B cell (primary cell): ENCODE measurements at regions of chr19 and their contacts with region 1.

Region 1: GRCh38 chr19:43463381-43464136 is 1.8 kb downstream of the LYPD3 start:
- DNase-seq: peak; percentile 98
- ATAC-seq: peak; percentile 92
- H3K4me3 ChIP-seq: peak overlapping the region; percentile 13 to 96 (median 77)
- H3K4me3 Mint-ChIP-seq: peak overlapping the region; percentile 97
- H3K27ac ChIP-seq: peak overlapping the region; percentile 30 to 40
- H3K27ac Mint-ChIP-seq: peak overlapping the region; percentile 85
- H3K4me1 ChIP-seq: peaks cover 8 to 14% of the 10 kb centered on the region in 2 donors
- H3K4me1 Mint-ChIP-seq: peaks cover 15% of the 10 kb centered on the region
- H3K27me3 ChIP-seq: peaks cover 0 to 12% (median 5%) of the 10 kb centered on the region in 4 experiments
- H3K27me3 Mint-ChIP-seq: peaks cover 4% of the 10 kb centered on the region
- CTCF ChIP-seq: no peak

Region 2: DNA sequence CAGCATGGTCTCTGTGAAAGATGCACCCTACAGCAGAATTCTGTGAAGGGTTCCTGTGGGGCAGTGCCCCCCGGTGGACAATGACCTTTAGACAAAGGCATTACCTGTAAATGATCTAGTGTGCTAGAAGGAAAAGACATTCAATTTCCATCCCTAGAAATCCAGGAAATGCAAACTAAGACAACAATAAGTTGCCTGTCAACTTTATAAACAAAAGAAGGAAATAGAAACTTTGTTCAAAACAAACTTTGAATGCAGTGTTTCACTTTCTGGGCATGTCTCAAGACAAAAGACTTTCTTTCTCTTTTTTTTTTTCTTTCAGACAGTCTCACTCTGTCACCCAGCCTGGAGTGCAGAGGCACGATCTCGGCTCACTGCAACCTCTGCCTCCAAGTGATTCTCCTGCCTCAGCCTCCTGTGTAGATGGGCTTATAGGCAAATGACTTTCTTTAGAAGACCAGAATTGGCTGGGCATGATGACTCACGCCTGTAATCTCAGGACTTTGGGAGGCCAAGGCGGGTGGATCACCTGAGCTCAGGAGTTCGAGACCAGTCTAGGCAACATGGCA is 33.3 kb before region 1 on chr19:
- CTCF ChIA-PET with region 1: interaction called, 12 read pairs
- POLR2A ChIA-PET with region 1: no interaction called
- intact Hi-C with region 1: no loop called
- DNase-seq: no peak
- ATAC-seq: peak; percentile 49
- H3K4me3 ChIP-seq: no peak overlapping the region
- H3K4me3 Mint-ChIP-seq: no peak overlapping the region
- H3K27ac ChIP-seq: peak overlapping the region in 1 of 2 donors; percentile 39
- H3K27ac Mint-ChIP-seq: no peak overlapping the region
- H3K4me1 ChIP-seq: peaks cover 8% of the 10 kb centered on the region in 2 donors
- H3K4me1 Mint-ChIP-seq: peaks cover 25% of the 10 kb centered on the region
- H3K27me3 ChIP-seq: peaks cover 0 to 2% (median 0%) of the 10 kb centered on the region in 4 experiments
- H3K27me3 Mint-ChIP-seq: no peaks in the 10 kb centered on the region
- CTCF ChIP-seq: peak; percentile 10

Region 3: GRCh38 chr19:43474986-43475705 is 11.6 kb after region 1 on chr19:
- CTCF ChIA-PET with region 1: interaction called, 11 read pairs
- POLR2A ChIA-PET with region 1: no interaction called
- intact Hi-C with region 1: loop called (anchors 1 kb)
- DNase-seq: peak; percentile 98
- ATAC-seq: peak; percentile 98
- H3K4me3 ChIP-seq: peak overlapping the region; percentile 45 to 66 (median 52)
- H3K4me3 Mint-ChIP-seq: peak overlapping the region; percentile 90
- H3K27ac ChIP-seq: peak overlapping the region; percentile 50 to 84
- H3K27ac Mint-ChIP-seq: peak overlapping the region; percentile 92
- H3K4me1 ChIP-seq: peaks cover 4 to 13% of the 10 kb centered on the region in 2 donors
- H3K4me1 Mint-ChIP-seq: peaks cover 13% of the 10 kb centered on the region
- H3K27me3 ChIP-seq: no peaks in the 10 kb centered on the region
- H3K27me3 Mint-ChIP-seq: no peaks in the 10 kb centered on the region
- CTCF ChIP-seq: no peak

Region 4: DNA sequence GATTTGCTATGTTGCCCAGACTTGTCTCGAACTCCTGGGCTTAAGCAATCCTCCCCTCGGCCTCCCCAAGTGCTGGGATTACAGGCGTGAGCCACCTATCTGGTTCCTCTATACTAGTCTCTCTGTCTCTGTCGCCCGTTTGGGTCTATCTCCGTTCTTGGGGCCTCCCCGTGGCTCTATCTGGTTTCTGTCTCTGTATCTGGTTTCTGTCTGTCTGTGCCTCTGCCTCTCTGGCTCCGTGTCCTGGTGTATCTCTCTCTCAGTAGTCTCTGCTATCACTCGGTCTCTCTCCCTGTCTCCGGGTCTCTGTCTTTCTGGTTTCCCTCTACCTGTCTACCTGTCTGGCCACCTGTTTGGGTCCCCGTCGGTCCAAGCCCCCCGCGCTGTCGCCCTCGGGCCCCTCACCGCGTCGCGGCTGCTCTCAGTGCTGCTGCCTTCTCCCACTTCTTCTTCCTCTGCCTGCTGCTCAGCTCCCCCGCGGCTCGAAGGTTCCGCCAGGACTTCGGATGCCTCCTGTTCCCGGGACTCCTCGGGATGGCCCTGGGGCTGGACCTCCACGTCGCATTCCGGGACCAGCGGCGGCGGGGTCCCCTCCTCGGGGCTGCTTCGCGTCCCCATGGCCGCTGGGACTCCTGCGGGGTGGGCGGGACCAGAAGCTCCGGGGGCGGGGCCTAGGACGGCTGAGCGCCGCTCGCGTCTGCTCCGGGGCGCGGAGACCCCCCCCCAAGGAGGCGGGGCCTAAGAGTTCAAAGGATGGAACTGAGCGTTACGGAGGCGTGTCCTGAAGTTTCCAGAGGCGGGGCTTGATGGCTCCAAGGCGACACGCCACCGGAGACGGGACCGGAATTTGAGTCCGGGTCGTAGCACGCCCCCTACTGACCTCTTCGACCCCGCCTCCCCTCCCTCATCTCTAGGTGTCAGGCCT is 40.2 kb after region 1 on chr19:
- CTCF ChIA-PET with region 1: interaction called, 6 read pairs
- POLR2A ChIA-PET with region 1: interaction called, 13 read pairs
- intact Hi-C with region 1: loop called (anchors 1 kb)
- DNase-seq: peak; percentile 97
- ATAC-seq: peak; percentile 95
- H3K4me3 ChIP-seq: peak overlapping the region; percentile 65 to 97 (median 76)
- H3K4me3 Mint-ChIP-seq: peak overlapping the region; percentile 95
- H3K27ac ChIP-seq: peak overlapping the region; percentile 80 to 82
- H3K27ac Mint-ChIP-seq: peak overlapping the region; percentile 98
- H3K4me1 ChIP-seq: peaks cover 12 to 22% of the 10 kb centered on the region in 2 donors
- H3K4me1 Mint-ChIP-seq: peaks cover 23% of the 10 kb centered on the region
- H3K27me3 ChIP-seq: no peaks in the 10 kb centered on the region
- H3K27me3 Mint-ChIP-seq: no peaks in the 10 kb centered on the region
- CTCF ChIP-seq: no peak

Region 5: GRCh38 chr19:43668406-43669158 is 205.0 kb after region 1 on chr19:
- CTCF ChIA-PET with region 1: no interaction called
- POLR2A ChIA-PET with region 1: no interaction called
- intact Hi-C with region 1: loop called (anchors 1 kb)
- DNase-seq: peak; percentile 92
- ATAC-seq: peak; percentile 85
- H3K4me3 ChIP-seq: peak overlapping the region; percentile 35 to 79 (median 59)
- H3K4me3 Mint-ChIP-seq: peak overlapping the region; percentile 84
- H3K27ac ChIP-seq: no peak overlapping the region
- H3K27ac Mint-ChIP-seq: peak overlapping the region; percentile 39
- H3K4me1 ChIP-seq: peaks cover 35 to 42% of the 10 kb centered on the region in 2 donors
- H3K4me1 Mint-ChIP-seq: peaks cover 37% of the 10 kb centered on the region
- H3K27me3 ChIP-seq: peaks cover 0 to 27% (median 7%) of the 10 kb centered on the region in 4 experiments
- H3K27me3 Mint-ChIP-seq: peaks cover 14% of the 10 kb centered on the region
- CTCF ChIP-seq: no peak

Region 6: GRCh38 chr19:44752816-44753618 is 1289.5 kb after region 1 on chr19:
- CTCF ChIA-PET with region 1: no interaction called
- POLR2A ChIA-PET with region 1: interaction called, 10 read pairs
- intact Hi-C with region 1: no loop called
- DNase-seq: peak; percentile 97
- ATAC-seq: peak; percentile 69
- H3K4me3 ChIP-seq: peak overlapping the region; percentile 44 to 94 (median 69)
- H3K4me3 Mint-ChIP-seq: peak overlapping the region; percentile 97
- H3K27ac ChIP-seq: peak overlapping the region; percentile 92
- H3K27ac Mint-ChIP-seq: peak overlapping the region; percentile 98
- H3K4me1 ChIP-seq: peaks cover 55 to 69% of the 10 kb centered on the region in 2 donors
- H3K4me1 Mint-ChIP-seq: peaks cover 59% of the 10 kb centered on the region
- H3K27me3 ChIP-seq: no peaks in the 10 kb centered on the region
- H3K27me3 Mint-ChIP-seq: no peaks in the 10 kb centered on the region
- CTCF ChIP-seq: no peak